Activated CD4-positive, alpha-beta T cell treated with anti-CD3 and anti-CD28 coated beads for 36 hours (primary cell): ENCODE measurements at regions of chrX and their contacts with region 1.

Region 1: GRCh38 chrX:129982274-129983251 is at the start of gene BCORL1:
- DNase-seq: peak; percentile 93
- ATAC-seq: peak; percentile 94
- H3K4me3 Mint-ChIP-seq: no peak within 1 kb of the TSS
- H3K27ac Mint-ChIP-seq: peak within 1 kb of the TSS; percentile 51
- H3K4me1 Mint-ChIP-seq: peaks cover 11% of the 10 kb centered on the region
- H3K27me3 Mint-ChIP-seq: no peaks in the 10 kb centered on the region
- total RNA-seq, gene BCORL1: 8.3 to 8.5 TPM

Region 2: GRCh38 chrX:129843459-129844306 is 138.9 kb before region 1 on chrX and contains the start of gene ZDHHC9:
- CTCF ChIA-PET with region 1: no interaction called
- POLR2A ChIA-PET with region 1: no interaction called
- intact Hi-C with region 1: loop called in 1 of 2 experiments (anchors 1 kb)
- DNase-seq: peak; percentile 92
- ATAC-seq: peak; percentile 97
- H3K4me3 Mint-ChIP-seq: peak within 1 kb of the TSS; percentile 77
- H3K27ac Mint-ChIP-seq: peak within 1 kb of the TSS; percentile 75
- H3K4me1 Mint-ChIP-seq: peaks cover 32% of the 10 kb centered on the region
- H3K27me3 Mint-ChIP-seq: no peaks in the 10 kb centered on the region
- total RNA-seq, gene ZDHHC9: 12.5 to 14.2 TPM

Region 3: DNA sequence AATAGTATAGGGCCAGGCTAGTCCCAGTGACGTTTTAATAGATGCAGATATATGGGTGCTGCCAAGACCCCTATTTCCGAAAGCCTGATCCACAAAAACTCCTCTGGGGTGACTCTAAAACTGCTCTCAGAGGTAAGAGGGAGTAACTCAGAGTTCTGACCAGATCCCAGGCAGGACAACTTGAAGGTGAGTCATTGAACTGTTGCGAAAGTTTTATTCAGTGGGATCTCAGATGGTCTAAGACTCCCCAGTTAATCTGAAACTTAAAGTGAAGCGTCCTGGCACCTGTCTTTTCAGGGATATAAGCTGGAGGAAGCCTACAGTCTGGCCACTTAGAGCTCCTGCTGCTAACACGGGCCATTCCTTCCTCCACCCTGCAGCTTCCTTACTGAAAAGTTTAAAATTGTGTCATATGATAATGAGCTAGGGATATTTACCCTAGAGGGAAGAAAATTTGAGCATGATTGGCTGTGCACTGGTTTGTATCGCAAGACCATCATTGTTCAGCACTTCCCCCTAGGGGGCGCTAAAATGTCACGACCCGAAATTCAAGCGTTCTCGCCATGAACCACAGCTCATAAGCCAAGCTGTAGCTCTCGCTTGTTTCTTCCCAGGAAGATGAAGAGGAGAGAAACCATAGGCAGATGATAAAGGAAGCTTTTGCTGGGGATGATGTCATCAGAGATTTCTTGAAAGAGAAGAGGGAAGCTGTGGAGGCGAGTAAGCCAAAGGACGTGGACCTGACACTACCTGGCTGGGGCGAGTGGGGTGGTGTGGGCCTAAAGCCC is 57.1 kb before region 1 on chrX:
- CTCF ChIA-PET with region 1: interaction called, 6 read pairs
- POLR2A ChIA-PET with region 1: no interaction called
- intact Hi-C with region 1: loop called in 1 of 2 experiments (anchors 2 kb)
- DNase-seq: peak; percentile 80
- ATAC-seq: peak; percentile 78
- H3K4me3 Mint-ChIP-seq: no peak overlapping the region
- H3K27ac Mint-ChIP-seq: no peak overlapping the region
- H3K4me1 Mint-ChIP-seq: peaks cover 1% of the 10 kb centered on the region
- H3K27me3 Mint-ChIP-seq: no peaks in the 10 kb centered on the region

Region 4: DNA sequence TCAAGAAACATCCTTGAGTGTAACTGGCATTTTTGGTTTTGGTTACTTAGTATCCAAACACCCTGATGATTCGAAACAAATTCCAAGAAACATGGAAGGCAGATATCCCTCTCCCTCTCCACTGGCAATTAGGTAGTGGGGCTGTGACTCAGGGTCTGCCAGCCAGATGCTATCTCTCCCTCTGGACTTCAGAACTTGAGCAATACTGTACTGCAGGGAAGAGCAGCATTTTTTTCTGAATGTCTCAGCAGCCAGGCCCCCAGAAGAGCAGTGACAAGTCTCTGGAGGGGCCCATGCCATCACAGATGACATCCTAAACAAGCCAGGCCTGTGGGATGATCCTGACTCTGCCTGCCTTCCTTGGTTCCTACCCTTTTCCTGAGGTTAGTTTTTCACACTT is 37.4 kb before region 1 on chrX:
- CTCF ChIA-PET with region 1: no interaction called
- POLR2A ChIA-PET with region 1: no interaction called
- intact Hi-C with region 1: no loop called
- DNase-seq: no peak
- ATAC-seq: no peak
- H3K4me3 Mint-ChIP-seq: no peak overlapping the region
- H3K27ac Mint-ChIP-seq: no peak overlapping the region
- H3K4me1 Mint-ChIP-seq: no peaks in the 10 kb centered on the region
- H3K27me3 Mint-ChIP-seq: no peaks in the 10 kb centered on the region

Region 5: GRCh38 chrX:129957241-129958082 is 25.1 kb before region 1 on chrX:
- CTCF ChIA-PET with region 1: no interaction called
- POLR2A ChIA-PET with region 1: no interaction called
- intact Hi-C with region 1: loop called (anchors 1 to 2 kb)
- DNase-seq: peak; percentile 71
- ATAC-seq: peak; percentile 61
- H3K4me3 Mint-ChIP-seq: peak overlapping the region; percentile 53
- H3K27ac Mint-ChIP-seq: peak overlapping the region; percentile 42
- H3K4me1 Mint-ChIP-seq: peaks cover 12% of the 10 kb centered on the region
- H3K27me3 Mint-ChIP-seq: peaks cover 2% of the 10 kb centered on the region

Region 6: GRCh38 chrX:130060122-130061069 is 77.8 kb after region 1 on chrX:
- CTCF ChIA-PET with region 1: no interaction called
- POLR2A ChIA-PET with region 1: interaction called, 3 read pairs
- intact Hi-C with region 1: loop called in 1 of 2 experiments (anchors 1 kb)
- DNase-seq: peak; percentile 90
- ATAC-seq: peak; percentile 91
- H3K4me3 Mint-ChIP-seq: peak overlapping the region; percentile 65
- H3K27ac Mint-ChIP-seq: peak overlapping the region; percentile 55
- H3K4me1 Mint-ChIP-seq: peaks cover 4% of the 10 kb centered on the region
- H3K27me3 Mint-ChIP-seq: no peaks in the 10 kb centered on the region

Region 7: GRCh38 chrX:130079824-130080406 is 97.4 kb after region 1 on chrX:
- CTCF ChIA-PET with region 1: no interaction called
- POLR2A ChIA-PET with region 1: no interaction called
- intact Hi-C with region 1: no loop called
- DNase-seq: peak; percentile 72
- ATAC-seq: no peak
- H3K4me3 Mint-ChIP-seq: no peak overlapping the region
- H3K27ac Mint-ChIP-seq: peak overlapping the region; percentile 26
- H3K4me1 Mint-ChIP-seq: peaks cover 45% of the 10 kb centered on the region
- H3K27me3 Mint-ChIP-seq: no peaks in the 10 kb centered on the region

Region 8: GRCh38 chrX:130268500-130269170 is 286.1 kb after region 1 on chrX and contains the start of gene ZNF280C:
- CTCF ChIA-PET with region 1: no interaction called
- POLR2A ChIA-PET with region 1: no interaction called
- intact Hi-C with region 1: loop called in 1 of 2 experiments (anchors 5 kb)
- DNase-seq: peak; percentile 96
- ATAC-seq: peak; percentile 98
- H3K4me3 Mint-ChIP-seq: peak within 1 kb of the TSS; percentile 85
- H3K27ac Mint-ChIP-seq: peak within 1 kb of the TSS; percentile 83
- H3K4me1 Mint-ChIP-seq: peaks cover 19% of the 10 kb centered on the region
- H3K27me3 Mint-ChIP-seq: no peaks in the 10 kb centered on the region
- total RNA-seq, gene ZNF280C: 5.9 to 8.6 TPM

Region 9: GRCh38 chrX:130378008-130378669 is 395.6 kb after region 1 on chrX:
- CTCF ChIA-PET with region 1: no interaction called
- POLR2A ChIA-PET with region 1: no interaction called
- intact Hi-C with region 1: no loop called
- DNase-seq: no peak
- ATAC-seq: no peak
- H3K4me3 Mint-ChIP-seq: no peak overlapping the region
- H3K27ac Mint-ChIP-seq: no peak overlapping the region
- H3K4me1 Mint-ChIP-seq: no peaks in the 10 kb centered on the region
- H3K27me3 Mint-ChIP-seq: peaks cover 3% of the 10 kb centered on the region

Region 10: GRCh38 chrX:130902783-130903613 is 920.4 kb after region 1 on chrX and contains the start of gene ENOX2:
- CTCF ChIA-PET with region 1: no interaction called
- POLR2A ChIA-PET with region 1: no interaction called
- intact Hi-C with region 1: loop called in 1 of 2 experiments (anchors 5 kb)
- DNase-seq: peak; percentile 86
- ATAC-seq: peak; percentile 98
- H3K4me3 Mint-ChIP-seq: no peak within 1 kb of the TSS
- H3K27ac Mint-ChIP-seq: peak within 1 kb of the TSS; percentile 80
- H3K4me1 Mint-ChIP-seq: peaks cover 5% of the 10 kb centered on the region
- H3K27me3 Mint-ChIP-seq: peaks cover 2% of the 10 kb centered on the region
- total RNA-seq, gene ENOX2: 12.5 to 16.5 TPM

Region 11: GRCh38 chrX:131216828-131217227 is 1234.3 kb after region 1 on chrX:
- CTCF ChIA-PET with region 1: no interaction called
- POLR2A ChIA-PET with region 1: no interaction called
- intact Hi-C with region 1: no loop called
- DNase-seq: no peak
- ATAC-seq: no peak
- H3K4me3 Mint-ChIP-seq: no peak overlapping the region
- H3K27ac Mint-ChIP-seq: no peak overlapping the region
- H3K4me1 Mint-ChIP-seq: no peaks in the 10 kb centered on the region
- H3K27me3 Mint-ChIP-seq: no peaks in the 10 kb centered on the region